ENCODE measurements at regions of chr6 and their contacts with region 1.

Region 1: DNA sequence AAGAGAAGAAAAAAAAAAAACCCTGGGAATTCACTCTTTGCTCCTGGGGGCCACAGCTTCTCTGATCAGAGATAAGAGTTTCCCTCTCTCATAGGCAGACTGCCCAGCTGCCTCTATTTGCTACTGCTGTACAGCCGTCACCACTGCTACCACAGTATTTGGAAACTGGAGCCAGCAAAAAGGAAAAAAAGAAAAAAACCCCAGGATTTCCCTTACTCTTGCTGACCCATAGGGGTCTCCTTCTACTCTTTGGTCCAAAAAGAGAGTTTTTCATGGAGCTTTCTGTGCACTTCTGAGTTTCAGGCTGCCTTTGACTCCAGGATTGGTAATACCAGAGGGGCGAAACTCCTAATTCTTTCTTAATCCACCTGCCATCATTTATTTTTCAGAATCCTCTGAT is 89.7 kb downstream of the MDGA1 start:
- DNase-seq: no peak
- ATAC-seq: no peak
- H3K4me3 ChIP-seq: no peak overlapping the region
- H3K27ac ChIP-seq: no peak overlapping the region
- H3K4me1 ChIP-seq: no peaks in the 10 kb centered on the region
- H3K27me3 ChIP-seq: no peaks in the 10 kb centered on the region
- CTCF ChIP-seq: no peak

Region 2: DNA sequence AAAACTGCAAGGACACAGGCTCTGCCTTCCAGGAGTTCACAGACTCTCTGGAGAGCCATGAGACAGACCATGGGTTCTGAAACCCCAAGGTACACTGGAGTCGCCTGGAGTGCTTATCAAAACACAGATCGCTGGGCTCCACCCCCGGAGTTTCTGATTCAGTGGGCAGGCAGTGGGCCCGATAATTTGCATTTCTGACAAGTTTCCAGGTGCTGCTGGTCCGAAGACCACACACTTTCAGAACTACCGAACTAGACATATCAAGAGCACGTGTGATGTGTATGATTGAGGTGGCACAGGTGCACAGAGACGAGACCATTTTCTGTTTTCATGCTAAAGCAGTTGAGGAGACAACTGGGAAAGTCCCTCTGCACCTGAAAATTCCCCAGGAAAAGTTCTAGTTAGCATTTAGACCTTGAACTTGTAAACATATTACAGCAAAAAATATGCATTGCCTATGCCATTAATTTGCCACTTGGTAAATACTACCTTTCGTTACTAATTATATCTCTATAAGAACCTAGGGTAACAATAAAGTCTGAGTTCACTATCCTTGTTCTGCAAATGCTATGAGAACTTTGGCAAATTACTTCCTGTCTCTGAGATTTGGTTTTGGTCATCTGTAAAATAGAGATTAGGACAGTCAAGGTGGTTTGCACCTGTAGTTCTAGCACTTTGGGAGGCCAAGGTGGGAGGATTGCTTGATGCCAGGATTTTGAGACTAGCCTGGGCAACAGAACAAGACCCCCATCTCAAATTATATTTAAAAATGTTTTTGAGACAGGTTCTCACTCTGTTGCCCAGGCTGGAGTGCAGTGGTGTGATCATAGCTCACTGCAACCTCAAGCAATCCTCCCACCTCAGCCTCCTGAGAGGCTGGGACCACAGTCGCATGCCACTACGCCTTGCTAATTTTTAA is 452.3 kb before region 1 on chr6:
- CTCF ChIA-PET with region 1: no interaction called
- POLR2A ChIA-PET with region 1: interaction called, 13 read pairs
- in situ Hi-C with region 1: no loop called
- intact Hi-C with region 1: no loop called
- DNase-seq: no peak
- ATAC-seq: 0 out of 2 replicates have a peak, but pooled peaks have one; percentile 48
- H3K4me3 ChIP-seq: no peak overlapping the region
- H3K27ac ChIP-seq: peak overlapping the region; percentile 58
- H3K4me1 ChIP-seq: peaks cover 10% of the 10 kb centered on the region
- H3K27me3 ChIP-seq: no peaks in the 10 kb centered on the region
- CTCF ChIP-seq: no peak

Region 3: GRCh38 chr6:37442416-37443215 is 165.3 kb before region 1 on chr6:
- CTCF ChIA-PET with region 1: no interaction called
- POLR2A ChIA-PET with region 1: no interaction called
- in situ Hi-C with region 1: no loop called
- intact Hi-C with region 1: no loop called
- DNase-seq: no peak
- ATAC-seq: no peak
- H3K4me3 ChIP-seq: no peak overlapping the region
- H3K27ac ChIP-seq: no peak overlapping the region
- H3K4me1 ChIP-seq: peaks cover 6% of the 10 kb centered on the region
- H3K27me3 ChIP-seq: no peaks in the 10 kb centered on the region
- CTCF ChIP-seq: no peak

Region 4: GRCh38 chr6:37680668-37681067 is 72.7 kb after region 1 on chr6:
- CTCF ChIA-PET with region 1: no interaction called
- POLR2A ChIA-PET with region 1: interaction called, 15 read pairs
- in situ Hi-C with region 1: no loop called
- intact Hi-C with region 1: no loop called
- DNase-seq: no peak
- ATAC-seq: no peak
- H3K4me3 ChIP-seq: no peak overlapping the region
- H3K27ac ChIP-seq: no peak overlapping the region
- H3K4me1 ChIP-seq: no peaks in the 10 kb centered on the region; the same call in 1 of the 2 replicates
- H3K27me3 ChIP-seq: no peaks in the 10 kb centered on the region
- CTCF ChIP-seq: no peak